ENCODE measurements at regions of chr16 and their contacts with region 1.

Region 1: DNA sequence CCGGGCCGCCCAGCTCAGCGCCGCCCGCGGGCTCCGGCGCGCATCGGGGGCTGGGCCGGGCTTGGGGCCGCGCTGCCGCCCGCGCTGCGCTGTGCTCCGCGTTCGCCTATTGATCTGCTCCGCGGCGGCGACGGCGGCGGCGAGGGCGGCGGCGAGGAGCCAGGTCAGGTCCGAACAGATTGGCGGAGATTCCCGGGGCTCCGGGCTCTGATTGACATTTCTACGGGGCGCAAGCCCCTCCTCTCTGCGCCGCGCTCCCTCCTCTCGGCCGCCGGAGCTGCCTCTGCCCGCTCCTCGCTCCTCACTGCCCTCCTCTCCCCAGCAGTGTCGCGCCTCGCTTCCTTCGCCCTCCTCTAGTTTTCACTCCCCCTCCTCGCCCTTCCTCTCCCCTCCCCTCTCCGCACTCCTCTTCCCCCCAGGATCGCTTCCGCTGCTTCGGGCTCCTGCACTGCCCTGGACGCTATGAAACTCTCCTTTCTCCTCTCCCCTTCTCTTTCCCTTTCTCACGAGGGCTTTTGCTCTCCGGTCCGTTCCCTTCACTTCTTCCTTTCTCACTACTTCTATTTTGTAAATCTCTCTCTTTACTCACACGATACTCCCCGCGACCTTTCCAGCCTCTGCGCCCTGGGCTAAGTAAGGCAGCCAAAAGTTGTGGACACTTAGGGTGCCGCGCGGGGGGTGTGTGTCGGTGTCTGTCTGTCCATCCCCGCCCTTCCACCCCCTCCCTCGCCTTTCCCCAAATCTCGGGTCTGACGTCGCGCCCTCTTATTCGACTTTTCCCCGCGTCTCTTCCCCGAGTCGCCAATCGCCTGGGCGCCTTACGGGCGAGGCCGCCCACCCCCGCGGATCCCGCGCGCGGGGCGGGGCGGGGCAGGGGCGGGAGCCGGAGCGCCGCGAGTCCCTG is at the start of gene IRX3:
- DNase-seq: peak; percentile 93
- total RNA-seq, gene IRX3: 70.2 TPM

Region 2: DNA sequence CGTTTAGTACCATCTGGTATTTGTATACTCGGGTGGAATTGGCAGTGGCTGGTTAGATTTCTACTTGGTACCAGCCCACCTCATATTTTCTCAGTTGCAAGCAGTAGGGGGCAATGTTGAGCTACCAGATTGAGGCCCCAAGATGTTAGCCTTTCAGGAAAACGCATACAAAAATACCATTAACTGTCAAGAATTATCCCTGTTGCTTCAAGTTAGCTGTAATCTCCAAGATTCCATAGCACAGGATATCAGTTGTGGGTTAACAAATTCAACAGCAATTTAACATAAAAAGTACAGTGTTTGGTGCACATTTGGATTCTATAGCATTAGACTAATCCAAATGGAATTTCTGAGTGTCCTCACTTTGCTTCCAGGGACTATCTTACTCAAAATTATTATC is 394.2 kb before region 1 on chr16:
- intact Hi-C with region 1: loop called (anchors 5 kb)
- DNase-seq: no peak

Region 3: DNA sequence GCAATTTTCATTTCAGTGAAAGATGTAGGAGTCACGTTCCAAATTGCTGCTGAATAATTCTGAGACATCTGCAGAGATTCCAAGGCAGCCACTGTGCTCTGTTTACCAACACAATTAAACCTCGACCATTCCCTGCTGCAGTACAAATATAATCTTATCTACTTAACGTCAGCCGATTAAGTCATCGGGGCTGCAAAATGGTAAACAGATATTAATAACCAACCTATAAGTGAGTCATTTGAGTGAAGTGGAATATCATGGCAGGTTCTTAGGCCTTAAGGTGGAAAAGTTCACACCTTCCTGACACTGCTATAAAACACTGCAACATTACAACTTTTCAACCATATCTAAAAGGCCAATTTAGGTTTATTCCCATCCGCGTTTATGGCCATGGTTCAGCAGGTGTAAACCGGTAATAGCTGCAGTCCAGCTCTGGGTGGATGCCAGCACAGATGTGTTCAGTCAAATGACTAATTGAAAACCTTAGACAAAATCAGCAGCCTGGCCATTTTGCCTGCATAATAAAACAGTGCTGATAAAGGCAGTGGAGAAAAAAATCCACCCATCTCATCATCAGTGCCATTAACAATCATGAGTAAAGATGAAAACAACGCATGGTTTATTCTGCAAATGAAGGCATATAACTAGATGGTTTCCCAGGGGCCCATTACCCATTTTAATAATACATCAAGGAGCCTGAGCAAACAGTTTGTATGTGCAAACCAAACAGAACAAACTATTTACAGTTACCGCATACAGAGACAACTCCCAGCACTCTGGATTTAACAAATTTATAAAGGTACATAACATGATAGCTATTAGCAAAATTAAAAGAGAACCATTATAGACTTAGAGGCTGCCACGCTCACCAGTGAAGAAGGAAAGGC is 203.1 kb after region 1 on chr16:
- intact Hi-C with region 1: loop called (anchors 5 kb)
- DNase-seq: no peak

Region 4: DNA sequence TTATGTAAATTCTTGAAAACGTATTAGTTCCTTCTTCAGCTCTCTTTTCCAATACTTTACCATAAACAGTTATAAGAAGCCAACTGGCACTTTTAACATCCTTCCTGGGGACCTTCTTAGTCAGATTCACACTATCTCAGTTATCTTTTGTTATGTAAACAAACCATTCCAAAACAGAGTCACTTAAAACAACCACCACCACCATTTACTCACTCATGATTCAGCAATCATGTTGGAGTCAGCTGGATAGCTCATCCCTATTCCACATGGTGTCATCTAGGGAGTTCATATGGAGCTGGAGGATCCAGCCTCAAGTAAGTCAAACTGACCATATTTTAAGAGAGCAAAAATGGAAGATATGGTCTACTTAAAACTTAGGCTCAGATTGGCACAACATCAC is 240.6 kb after region 1 on chr16:
- intact Hi-C with region 1: loop called (anchors 5 kb)
- DNase-seq: no peak

Region 5: GRCh38 chr16:54817446-54817845 is 531.1 kb after region 1 on chr16:
- intact Hi-C with region 1: loop called (anchors 10 kb)
- DNase-seq: no peak

Region 6: DNA sequence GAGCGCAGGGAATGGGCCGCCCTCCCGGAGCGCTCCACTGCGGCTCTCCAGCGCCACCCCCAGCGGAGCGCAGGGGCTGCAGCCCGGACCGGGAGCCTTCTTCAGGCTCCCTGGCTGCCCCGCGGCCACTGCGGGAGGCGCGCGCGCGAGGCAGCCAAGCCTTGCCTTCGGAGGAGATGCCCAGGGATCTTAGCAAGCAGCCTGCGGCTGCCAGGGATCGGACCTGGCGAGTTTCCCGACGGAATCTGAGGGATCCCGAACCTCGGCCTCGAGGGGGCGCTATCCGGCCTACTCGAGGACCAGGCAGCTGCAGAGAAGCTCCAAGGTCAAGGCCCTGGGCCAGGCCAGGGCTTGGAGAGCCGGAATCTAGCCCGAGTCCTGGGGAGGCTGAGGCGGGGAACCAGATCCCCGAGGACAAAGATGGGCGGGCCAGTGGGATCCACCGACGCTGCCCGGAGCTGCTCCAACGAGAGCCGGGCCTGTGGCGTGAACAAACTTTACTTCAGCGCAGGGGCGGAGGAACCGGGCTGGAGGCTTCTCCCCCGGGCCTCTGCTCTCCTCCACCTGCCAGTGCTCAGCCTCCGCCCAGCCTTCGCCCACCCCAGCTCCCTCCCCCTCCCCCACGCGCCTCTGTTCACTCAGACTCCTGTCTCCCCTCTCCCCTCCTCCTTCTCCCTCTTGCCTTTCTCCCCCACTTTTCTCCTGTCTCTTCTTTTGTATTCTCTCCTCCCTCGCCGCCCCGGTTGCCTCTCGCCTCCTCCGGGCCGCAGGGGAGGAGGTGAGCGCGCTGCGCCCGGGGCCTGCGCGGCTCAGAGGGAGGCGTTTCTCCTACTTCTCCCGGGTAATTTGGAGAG is 1037.5 kb after region 1 on chr16 and contains the start of gene IRX6:
- intact Hi-C with region 1: loop called (anchors 5 kb)
- DNase-seq: peak; percentile 87
- total RNA-seq, gene IRX6: 37.1 TPM

Measured in cardiac septum (tissue), 1 donor.